Activated CD4-positive, alpha-beta T cell treated with anti-CD3 and anti-CD28 coated beads for 36 hours (primary cell): ENCODE measurements at regions of chr4 and their contacts with region 1.

Region 1: DNA sequence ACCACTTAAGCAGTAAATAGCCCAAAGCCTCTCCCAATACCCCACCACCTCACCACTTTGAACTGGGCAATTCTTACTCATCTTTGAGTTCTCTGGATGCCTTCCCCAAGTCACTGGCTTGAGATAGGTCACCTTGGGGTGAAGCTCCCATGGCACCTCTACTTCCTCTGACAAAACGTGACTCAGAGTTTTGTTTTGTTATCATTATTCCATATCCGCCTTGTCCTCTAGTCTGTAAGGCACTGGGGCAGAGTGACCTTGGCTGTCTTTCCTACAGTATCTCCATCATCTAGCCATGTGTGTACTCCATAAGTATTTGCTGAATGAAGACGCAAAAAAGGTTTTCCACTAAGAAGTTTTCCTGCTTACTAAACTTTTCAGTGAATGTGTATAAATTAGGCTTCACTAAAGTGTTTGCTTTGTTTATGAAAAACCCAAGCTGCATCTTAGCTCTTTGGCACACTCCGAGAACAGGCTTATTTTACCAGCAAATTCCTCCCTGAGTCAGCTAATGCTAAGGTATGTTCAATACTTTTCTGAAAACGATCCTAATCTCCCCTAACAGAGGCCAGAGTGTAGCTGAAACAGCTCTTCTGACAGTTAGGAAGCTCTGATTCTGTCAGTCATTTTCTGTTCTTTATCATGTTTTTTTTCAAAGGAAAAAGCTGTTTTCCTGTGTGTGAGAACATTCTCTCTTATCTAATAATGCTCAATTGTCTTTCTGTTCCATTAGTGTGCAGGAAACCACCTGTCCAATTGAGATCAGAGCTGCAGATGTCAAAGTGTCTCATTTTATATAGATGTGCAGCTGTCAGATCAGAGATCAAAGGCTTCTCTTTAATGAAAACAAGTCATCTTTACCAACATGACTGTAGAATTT is 30.2 kb upstream of the TSPAN5 start:
- DNase-seq: peak; percentile 51
- ATAC-seq: peak; percentile 90
- H3K4me3 Mint-ChIP-seq: peak overlapping the region; percentile 2
- H3K27ac Mint-ChIP-seq: peak overlapping the region; percentile 67
- H3K4me1 Mint-ChIP-seq: peaks cover 39% of the 10 kb centered on the region
- H3K27me3 Mint-ChIP-seq: no peaks in the 10 kb centered on the region

Region 2: GRCh38 chr4:98510757-98511517 is 177.7 kb before region 1 on chr4:
- CTCF ChIA-PET with region 1: no interaction called
- POLR2A ChIA-PET with region 1: no interaction called
- intact Hi-C with region 1: no loop called
- DNase-seq: peak; percentile 65
- ATAC-seq: peak; percentile 88
- H3K4me3 Mint-ChIP-seq: no peak overlapping the region
- H3K27ac Mint-ChIP-seq: peak overlapping the region; percentile 75
- H3K4me1 Mint-ChIP-seq: peaks cover 53% of the 10 kb centered on the region
- H3K27me3 Mint-ChIP-seq: no peaks in the 10 kb centered on the region

Region 3: GRCh38 chr4:98630737-98631454 is 57.8 kb before region 1 on chr4:
- CTCF ChIA-PET with region 1: no interaction called
- POLR2A ChIA-PET with region 1: no interaction called
- intact Hi-C with region 1: no loop called
- DNase-seq: no peak
- ATAC-seq: no peak
- H3K4me3 Mint-ChIP-seq: no peak overlapping the region
- H3K27ac Mint-ChIP-seq: no peak overlapping the region
- H3K4me1 Mint-ChIP-seq: peaks cover 32% of the 10 kb centered on the region
- H3K27me3 Mint-ChIP-seq: no peaks in the 10 kb centered on the region

Region 4: GRCh38 chr4:98706200-98706813 is 17.7 kb after region 1 on chr4:
- CTCF ChIA-PET with region 1: interaction called, 4 read pairs
- POLR2A ChIA-PET with region 1: no interaction called
- intact Hi-C with region 1: loop called in 1 of 2 experiments (anchors 2 kb)
- DNase-seq: no peak
- ATAC-seq: peak; percentile 89
- H3K4me3 Mint-ChIP-seq: peak overlapping the region; percentile 11
- H3K27ac Mint-ChIP-seq: peak overlapping the region; percentile 74
- H3K4me1 Mint-ChIP-seq: peaks cover 26% of the 10 kb centered on the region
- H3K27me3 Mint-ChIP-seq: no peaks in the 10 kb centered on the region

Region 5: GRCh38 chr4:98828801-98829200 is 140.2 kb after region 1 on chr4:
- CTCF ChIA-PET with region 1: no interaction called
- POLR2A ChIA-PET with region 1: no interaction called
- intact Hi-C with region 1: no loop called
- DNase-seq: peak; percentile 43
- ATAC-seq: peak; percentile 53
- H3K4me3 Mint-ChIP-seq: no peak overlapping the region
- H3K27ac Mint-ChIP-seq: no peak overlapping the region
- H3K4me1 Mint-ChIP-seq: no peaks in the 10 kb centered on the region
- H3K27me3 Mint-ChIP-seq: no peaks in the 10 kb centered on the region